ENCODE measurements at regions of chr14 and their contacts with region 1.

Region 1: GRCh38 chr14:91649930-91650329 is 82.0 kb downstream of the CATSPERB start:
- DNase-seq: peak; percentile 27
- H3K4me3 ChIP-seq: no peak overlapping the region
- H3K27ac ChIP-seq: no peak overlapping the region
- H3K4me1 ChIP-seq: peaks cover 8% of the 10 kb centered on the region
- H3K27me3 ChIP-seq: no peaks in the 10 kb centered on the region
- CTCF ChIP-seq: peak; percentile 34 to 71

Region 2: DNA sequence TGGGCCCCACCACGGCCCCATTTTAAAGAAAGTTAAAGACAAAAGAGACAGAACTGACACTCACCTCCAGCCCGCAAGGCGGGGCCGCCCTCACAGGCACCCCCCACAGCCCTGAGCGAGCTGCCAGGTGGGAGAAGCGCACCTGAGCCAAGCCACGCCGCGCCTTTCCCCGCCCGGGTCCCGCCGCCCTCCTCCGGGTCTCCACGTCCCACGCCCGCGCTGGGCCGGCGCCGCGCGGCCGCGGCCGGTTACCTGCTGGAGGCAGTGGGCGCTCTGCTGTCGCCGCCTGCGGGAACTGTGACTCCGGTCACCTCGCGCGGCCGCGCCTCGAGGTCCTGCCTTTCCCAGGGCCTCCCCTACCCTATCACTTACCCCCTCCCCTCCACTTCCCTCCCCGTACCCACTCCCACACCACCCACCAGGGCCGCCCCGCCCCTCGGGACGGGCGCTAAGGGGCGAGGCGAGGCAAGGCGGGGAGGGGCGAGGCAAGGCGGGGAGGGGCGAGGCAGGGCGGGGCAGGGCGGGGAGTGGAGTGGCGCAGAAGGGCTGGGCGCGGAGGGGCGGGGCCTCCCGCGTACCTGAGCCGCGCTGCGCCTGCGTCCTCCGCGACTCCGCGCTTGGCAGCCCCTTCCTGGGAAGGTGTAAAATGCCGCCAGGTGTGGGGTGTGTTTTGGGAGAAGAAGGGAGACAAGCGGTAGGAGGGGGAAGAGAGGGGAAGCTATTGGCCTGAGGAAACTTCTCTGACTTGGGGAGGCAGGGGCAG is 186.4 kb after region 1 on chr14:
- CTCF ChIA-PET with region 1: no interaction called
- dilution Hi-C with region 1: no loop called
- in situ Hi-C with region 1: no loop called
- intact Hi-C with region 1: loop called (anchors 2 kb)
- DNase-seq: peak; percentile 84
- H3K4me3 ChIP-seq: peak overlapping the region; percentile 86 to 91 (median 91)
- H3K27ac ChIP-seq: peak overlapping the region; percentile 55
- H3K4me1 ChIP-seq: peaks cover 8% of the 10 kb centered on the region
- H3K27me3 ChIP-seq: no peaks in the 10 kb centered on the region
- CTCF ChIP-seq: no peak

Region 3: GRCh38 chr14:91911474-91912032 is 261.6 kb after region 1 on chr14:
- CTCF ChIA-PET with region 1: interaction called, 14 read pairs
- dilution Hi-C with region 1: no loop called
- in situ Hi-C with region 1: loop called (anchors 5 kb)
- intact Hi-C with region 1: loop called (anchors 1 kb)
- DNase-seq: peak; percentile 35
- H3K4me3 ChIP-seq: no peak overlapping the region
- H3K27ac ChIP-seq: no peak overlapping the region
- H3K4me1 ChIP-seq: no peaks in the 10 kb centered on the region
- H3K27me3 ChIP-seq: no peaks in the 10 kb centered on the region
- CTCF ChIP-seq: peak; percentile 27 to 82

Region 4: DNA sequence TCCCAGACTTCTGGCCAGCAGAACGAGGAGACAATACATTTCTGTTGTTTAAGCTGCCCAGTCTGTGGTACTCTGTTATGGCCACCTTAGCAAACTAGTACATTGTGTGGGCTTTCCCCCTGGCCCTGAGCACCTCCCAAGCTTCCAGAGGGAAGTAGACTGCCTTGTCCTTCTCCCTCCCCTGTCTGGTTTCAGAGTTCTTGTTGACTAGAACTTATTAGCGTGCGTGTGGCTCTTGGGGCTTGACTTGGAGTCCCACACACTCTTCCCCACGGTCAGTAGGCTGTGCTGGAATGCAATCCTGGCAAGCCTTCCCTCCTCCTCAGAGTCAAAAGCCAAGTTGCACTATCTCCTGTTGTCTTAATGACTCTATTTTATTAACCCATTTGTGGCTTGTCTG is 269.9 kb after region 1 on chr14:
- CTCF ChIA-PET with region 1: no interaction called
- dilution Hi-C with region 1: no loop called
- in situ Hi-C with region 1: loop called in 1 of 2 experiments (anchors 5 kb)
- intact Hi-C with region 1: no loop called
- DNase-seq: no peak
- H3K4me3 ChIP-seq: no peak overlapping the region
- H3K27ac ChIP-seq: no peak overlapping the region
- H3K4me1 ChIP-seq: peaks cover 3% of the 10 kb centered on the region
- H3K27me3 ChIP-seq: no peaks in the 10 kb centered on the region
- CTCF ChIP-seq: no peak

Region 5: DNA sequence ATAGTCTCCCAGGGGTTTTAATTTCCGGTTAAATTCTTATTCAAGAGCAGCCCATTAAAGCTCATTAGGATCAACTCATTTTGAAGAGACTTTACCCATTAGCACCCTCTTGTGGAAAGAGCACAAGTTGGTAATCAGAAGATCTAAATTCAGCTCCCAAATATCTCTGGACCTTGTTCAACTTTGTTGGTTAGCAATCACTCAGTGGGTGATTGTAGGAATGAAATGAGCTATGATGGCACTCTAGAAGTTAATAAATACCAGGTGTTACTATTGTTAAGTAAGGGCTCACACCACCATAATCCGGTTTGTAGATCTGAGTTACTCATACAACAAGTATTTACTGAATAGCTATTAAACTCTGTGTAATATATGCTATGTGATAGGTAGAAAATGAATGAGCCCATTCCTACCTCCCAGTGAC is 347.0 kb after region 1 on chr14:
- CTCF ChIA-PET with region 1: no interaction called
- dilution Hi-C with region 1: no loop called
- in situ Hi-C with region 1: loop called in 1 of 2 experiments (anchors 10 kb)
- intact Hi-C with region 1: loop called (anchors 1 kb)
- DNase-seq: peak; percentile 83
- H3K4me3 ChIP-seq: no peak overlapping the region
- H3K27ac ChIP-seq: no peak overlapping the region
- H3K4me1 ChIP-seq: peaks cover 5% of the 10 kb centered on the region
- H3K27me3 ChIP-seq: no peaks in the 10 kb centered on the region
- CTCF ChIP-seq: peak; percentile 62 to 68

Region 6: DNA sequence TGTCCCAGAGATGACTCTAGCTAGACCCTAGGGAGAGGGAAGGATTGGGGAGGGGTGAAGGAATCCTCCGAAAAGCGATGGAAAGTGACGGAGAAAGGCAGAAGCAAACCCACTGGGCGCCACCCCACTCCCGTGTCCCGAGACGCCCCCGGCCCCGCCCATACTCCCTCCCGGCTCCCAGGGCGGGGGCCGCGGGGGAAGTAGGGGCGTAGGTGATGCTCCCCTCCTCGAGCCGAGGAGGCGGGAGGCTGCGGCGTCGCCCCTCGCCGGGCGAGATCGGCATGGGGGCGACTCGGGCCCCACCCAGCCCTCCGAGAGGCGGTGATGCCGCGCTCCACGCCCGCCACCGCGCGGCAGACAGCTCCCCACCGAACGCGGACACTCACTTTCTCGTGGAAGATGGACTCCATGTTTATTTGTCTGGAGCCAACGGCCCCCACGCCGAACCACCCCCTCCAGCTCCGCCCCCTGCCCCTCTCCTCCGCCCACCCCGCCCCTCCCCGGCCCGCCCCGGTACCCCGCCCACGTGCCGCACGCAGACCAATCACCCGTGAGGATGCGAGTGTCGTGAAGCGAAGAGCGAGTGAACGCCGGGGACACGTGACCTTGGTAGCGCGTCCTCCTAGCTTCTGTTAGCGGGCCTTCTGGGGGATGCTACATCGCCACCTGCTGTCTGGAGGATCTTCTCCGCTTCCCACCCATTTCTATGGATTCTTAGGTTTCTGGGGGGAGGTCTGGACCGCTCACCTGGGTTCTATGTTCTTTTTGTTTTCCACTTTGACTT is 456.4 kb after region 1 on chr14 and contains the start of gene ATXN3:
- CTCF ChIA-PET with region 1: interaction called, 10 read pairs
- dilution Hi-C with region 1: no loop called
- in situ Hi-C with region 1: no loop called
- intact Hi-C with region 1: no loop called
- DNase-seq: peak; percentile 96
- H3K4me3 ChIP-seq: peak within 1 kb of the TSS; percentile 66 to 71 (median 70)
- H3K27ac ChIP-seq: peak within 1 kb of the TSS; percentile 90
- H3K4me1 ChIP-seq: peaks cover 5% of the 10 kb centered on the region
- H3K27me3 ChIP-seq: no peaks in the 10 kb centered on the region
- CTCF ChIP-seq: peak; percentile 76 to 85
- total RNA-seq, gene ATXN3: 21.8 to 25.5 TPM